CD4-positive, alpha-beta memory T cell (primary cell): ENCODE measurements at regions of chr19 and their contacts with region 1.

Region 1: GRCh38 chr19:49983645-49984229 is 22.8 kb upstream of the SIGLEC11 start:
- DNase-seq: peak; percentile 68 to 75 (median 72)
- H3K4me3 ChIP-seq: no peak overlapping the region
- H3K4me3 Mint-ChIP-seq: no peak overlapping the region
- H3K27ac ChIP-seq: no peak overlapping the region
- H3K27ac Mint-ChIP-seq: peak overlapping the region in 2 of 7 donors; percentile 40 to 68
- H3K4me1 ChIP-seq: no peaks in the 10 kb centered on the region
- H3K4me1 Mint-ChIP-seq: peaks cover 0 to 10% (median 6%) of the 10 kb centered on the region in 4 donors
- H3K27me3 ChIP-seq: no peaks in the 10 kb centered on the region
- H3K27me3 Mint-ChIP-seq: no peaks in the 10 kb centered on the region

Region 2: DNA sequence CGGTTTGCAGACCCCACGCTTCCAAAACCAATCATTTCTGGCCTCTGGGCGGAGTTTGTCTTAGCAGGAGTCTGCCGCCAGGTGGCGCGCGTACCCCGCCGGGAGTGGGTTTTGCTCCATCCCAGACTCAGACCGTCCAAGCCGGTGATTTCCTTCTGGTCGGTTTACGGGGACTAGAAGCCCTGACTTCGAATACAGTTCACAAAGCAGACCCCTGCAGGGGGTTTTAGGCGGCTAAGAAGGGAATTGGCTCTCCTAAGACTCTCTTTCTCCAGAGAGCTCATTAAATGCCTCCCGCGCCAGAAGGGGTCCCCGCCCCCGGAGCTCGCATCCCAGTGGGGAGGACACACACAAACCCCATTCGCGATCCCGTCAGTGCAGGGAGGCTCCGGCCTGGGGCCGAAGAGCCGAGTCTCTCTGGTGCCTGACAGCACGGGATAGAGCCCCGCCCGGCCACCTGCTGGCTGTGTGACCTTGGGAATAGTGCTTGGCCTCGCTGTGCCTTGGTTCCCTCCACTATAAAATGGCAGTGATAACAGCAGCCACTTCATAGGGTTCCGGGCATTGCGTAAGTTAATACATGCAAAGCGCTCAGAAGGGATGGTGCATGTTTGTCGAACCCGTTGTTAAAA is 45.9 kb before region 1 on chr19:
- CTCF ChIA-PET with region 1: interaction called, 37 read pairs
- POLR2A ChIA-PET with region 1: no interaction called
- intact Hi-C with region 1: loop called (anchors 1 kb)
- DNase-seq: peak; percentile 59 to 75 (median 65)
- H3K4me3 ChIP-seq: no peak overlapping the region
- H3K4me3 Mint-ChIP-seq: peak overlapping the region in 2 of 8 donors; percentile 36 to 38
- H3K27ac ChIP-seq: no peak overlapping the region
- H3K27ac Mint-ChIP-seq: no peak overlapping the region
- H3K4me1 ChIP-seq: peaks cover 14% of the 10 kb centered on the region
- H3K4me1 Mint-ChIP-seq: peaks cover 9 to 18% (median 10%) of the 10 kb centered on the region in 4 donors
- H3K27me3 ChIP-seq: no peaks in the 10 kb centered on the region
- H3K27me3 Mint-ChIP-seq: peaks cover 3% of the 10 kb centered on the region in 2 donors

Region 3: DNA sequence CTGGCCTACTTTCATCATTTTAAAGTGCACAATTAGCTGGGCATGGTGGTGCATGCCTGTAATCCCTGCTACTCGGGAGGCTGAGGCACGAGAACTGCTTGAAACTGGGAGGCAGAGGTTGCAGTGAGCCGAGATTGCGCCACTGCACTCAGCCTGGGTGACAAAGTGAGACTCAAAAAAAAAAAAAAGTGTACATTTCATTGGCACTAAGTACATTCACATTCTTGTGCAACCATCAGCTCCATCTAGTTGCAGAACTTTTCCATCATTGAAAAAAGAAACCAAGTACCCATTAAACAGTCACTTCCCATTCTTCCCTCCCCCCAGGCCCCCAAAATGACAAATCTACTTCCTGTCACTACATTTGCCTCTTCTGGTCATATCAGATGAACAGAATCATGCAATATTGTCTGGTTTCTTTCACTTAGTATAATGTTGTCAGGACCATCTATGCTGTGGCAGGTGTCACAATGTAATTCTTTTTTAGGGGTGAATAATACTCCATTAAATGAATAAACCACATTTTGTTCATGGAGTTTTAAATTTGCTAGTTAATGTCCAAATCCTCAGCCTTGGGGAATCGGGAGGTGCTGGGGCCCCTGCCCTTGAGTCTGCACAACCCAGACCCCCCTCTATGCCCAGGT is 15.3 kb before region 1 on chr19:
- CTCF ChIA-PET with region 1: no interaction called
- POLR2A ChIA-PET with region 1: no interaction called
- intact Hi-C with region 1: no loop called
- DNase-seq: no peak
- H3K4me3 ChIP-seq: no peak overlapping the region
- H3K4me3 Mint-ChIP-seq: no peak overlapping the region
- H3K27ac ChIP-seq: no peak overlapping the region
- H3K27ac Mint-ChIP-seq: peak overlapping the region in 1 of 7 donors; percentile 49
- H3K4me1 ChIP-seq: no peaks in the 10 kb centered on the region
- H3K4me1 Mint-ChIP-seq: no peaks in the 10 kb centered on the region
- H3K27me3 ChIP-seq: peaks cover 6% of the 10 kb centered on the region
- H3K27me3 Mint-ChIP-seq: peaks cover 6 to 14% of the 10 kb centered on the region in 2 donors

Region 4: GRCh38 chr19:49997709-49998108 is 14.0 kb after region 1 on chr19:
- CTCF ChIA-PET with region 1: interaction called, 10 read pairs
- POLR2A ChIA-PET with region 1: no interaction called
- intact Hi-C with region 1: no loop called
- DNase-seq: peak in 3 of 5 donors; percentile 6 to 17 (median 13)
- H3K4me3 ChIP-seq: no peak overlapping the region
- H3K4me3 Mint-ChIP-seq: no peak overlapping the region
- H3K27ac ChIP-seq: no peak overlapping the region
- H3K27ac Mint-ChIP-seq: peak overlapping the region in 1 of 7 donors; percentile 80
- H3K4me1 ChIP-seq: no peaks in the 10 kb centered on the region
- H3K4me1 Mint-ChIP-seq: peaks cover 0 to 3% (median 2%) of the 10 kb centered on the region in 4 donors
- H3K27me3 ChIP-seq: no peaks in the 10 kb centered on the region
- H3K27me3 Mint-ChIP-seq: no peaks in the 10 kb centered on the region

Region 5: GRCh38 chr19:50067575-50067974 is 83.8 kb after region 1 on chr19:
- CTCF ChIA-PET with region 1: no interaction called
- POLR2A ChIA-PET with region 1: no interaction called
- intact Hi-C with region 1: no loop called
- DNase-seq: no peak
- H3K4me3 ChIP-seq: no peak overlapping the region
- H3K4me3 Mint-ChIP-seq: no peak overlapping the region
- H3K27ac ChIP-seq: no peak overlapping the region
- H3K27ac Mint-ChIP-seq: no peak overlapping the region
- H3K4me1 ChIP-seq: no peaks in the 10 kb centered on the region
- H3K4me1 Mint-ChIP-seq: no peaks in the 10 kb centered on the region
- H3K27me3 ChIP-seq: no peaks in the 10 kb centered on the region
- H3K27me3 Mint-ChIP-seq: peaks cover 7 to 11% of the 10 kb centered on the region in 2 donors